ENCODE measurements at regions of chr15 and their contacts with region 1.

Region 1: DNA sequence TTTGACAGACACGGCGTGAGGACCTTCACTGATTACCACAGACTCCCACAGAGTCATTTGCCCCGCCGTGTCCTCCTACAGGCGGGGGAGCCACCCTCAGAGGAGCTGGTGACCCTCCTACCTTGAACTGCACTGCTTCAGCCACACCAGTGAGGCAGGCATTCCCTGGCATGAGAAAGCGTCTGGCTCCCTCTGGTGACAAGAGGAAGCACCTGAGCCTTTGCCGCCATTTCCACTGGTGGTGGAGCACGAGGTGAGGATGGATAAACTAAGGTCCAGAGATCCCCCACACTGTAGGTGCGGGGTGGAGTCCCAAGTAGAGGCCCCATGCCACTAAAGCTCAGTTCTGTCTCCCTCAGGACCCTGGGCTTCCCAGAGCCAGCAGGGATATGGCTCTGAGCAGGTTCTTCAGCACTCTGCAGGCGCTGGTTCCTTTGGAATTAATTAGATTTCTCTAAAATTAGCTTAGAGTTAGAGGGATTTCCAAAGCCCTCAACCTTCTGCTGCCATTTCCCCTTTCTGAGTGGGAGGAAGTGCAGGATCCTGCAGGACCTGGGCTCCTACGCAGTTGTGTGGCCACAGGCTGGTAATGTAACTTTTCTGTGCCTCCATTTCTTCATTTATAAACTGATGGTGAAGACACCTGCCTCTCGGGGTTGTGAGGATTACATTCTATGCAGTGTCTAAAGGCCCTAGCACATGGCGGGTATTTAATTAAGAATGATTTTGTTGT is 224.0 kb downstream of the SLCO3A1 start:
- DNase-seq: peak; percentile 38 to 80
- H3K4me3 ChIP-seq: no peak overlapping the region
- H3K27ac ChIP-seq: no peak overlapping the region
- H3K4me1 ChIP-seq: peaks cover 0 to 2% (median 0%) of the 10 kb centered on the region in 4 experiments; a peak in 2 of 7 replicates
- H3K27me3 ChIP-seq: no peaks in the 10 kb centered on the region
- CTCF ChIP-seq: peak; percentile 93 to 97 (median 96)
- EP300 ChIP-seq: no peak
- POLR2A ChIP-seq: no peak
- RAD21 ChIP-seq: peak; percentile 97 to 99

Region 2: DNA sequence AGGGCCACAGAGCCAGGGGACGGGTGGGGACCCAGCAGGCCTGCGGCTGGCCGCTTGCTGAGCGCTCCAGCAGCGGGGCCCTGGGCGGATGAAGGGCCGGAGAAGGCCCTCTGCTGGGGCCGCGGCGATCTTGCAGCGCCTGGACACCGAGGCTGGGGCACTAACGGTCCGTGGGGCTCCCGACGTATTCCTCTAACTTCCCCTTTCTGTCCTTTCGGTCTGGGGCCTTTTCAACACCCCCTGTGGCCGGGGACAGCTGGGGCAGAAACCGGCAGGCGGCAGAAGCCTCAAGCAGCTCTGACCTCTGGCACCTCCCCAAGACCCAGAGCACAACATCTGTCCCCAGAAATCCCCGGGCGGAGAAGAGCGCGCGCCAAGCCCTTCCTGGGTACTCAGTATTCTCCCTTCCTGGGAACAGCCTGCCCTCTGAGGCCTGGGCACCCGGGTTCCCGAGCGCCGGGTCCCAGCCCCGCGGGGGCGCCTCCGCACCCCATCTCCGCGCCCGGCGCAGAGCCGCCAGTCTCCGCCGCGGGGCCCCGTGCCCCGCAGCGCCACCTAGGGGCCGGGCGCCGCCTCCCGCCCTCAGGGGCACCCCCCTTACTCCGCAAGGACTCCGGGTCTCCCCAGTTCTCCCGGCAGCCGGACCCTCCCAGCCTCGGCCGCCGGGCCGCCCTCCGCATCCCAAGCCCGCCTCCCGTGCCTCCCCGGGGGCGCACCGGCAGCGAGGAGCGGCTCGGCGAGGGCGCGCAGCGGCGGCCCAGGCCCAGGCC is 224.6 kb before region 1 on chr15:
- CTCF ChIA-PET with region 1: interaction called, 118 read pairs
- POLR2A ChIA-PET with region 1: no interaction called
- DNase-seq: peak in 1 of 2 experiments; percentile 86
- H3K4me3 ChIP-seq: peak overlapping the region; percentile 66 to 86 (median 74)
- H3K27ac ChIP-seq: no peak overlapping the region
- H3K4me1 ChIP-seq: peaks cover 7 to 15% (median 11%) of the 10 kb centered on the region in 4 experiments; a peak in 6 of 7 replicates
- H3K27me3 ChIP-seq: peaks cover 0 to 11% (median 10%) of the 10 kb centered on the region in 4 experiments; a peak in 5 of 7 replicates
- CTCF ChIP-seq: peak; percentile 63 to 88 (median 76)
- EP300 ChIP-seq: no peak
- POLR2A ChIP-seq: peak in 1 of 2 experiments; percentile 19; a peak in 1 of 3 replicates
- RAD21 ChIP-seq: peak; percentile 50 to 56

Region 3: GRCh38 chr15:91897585-91898372 is 179.7 kb before region 1 on chr15:
- CTCF ChIA-PET with region 1: interaction called, 18 read pairs
- POLR2A ChIA-PET with region 1: no interaction called
- DNase-seq: no peak
- H3K4me3 ChIP-seq: no peak overlapping the region
- H3K27ac ChIP-seq: no peak overlapping the region
- H3K4me1 ChIP-seq: peaks cover 0 to 16% (median 6%) of the 10 kb centered on the region in 4 experiments; a peak in 4 of 7 replicates
- H3K27me3 ChIP-seq: no peaks in the 10 kb centered on the region
- CTCF ChIP-seq: no peak
- EP300 ChIP-seq: no peak
- POLR2A ChIP-seq: no peak
- RAD21 ChIP-seq: no peak

Region 4: DNA sequence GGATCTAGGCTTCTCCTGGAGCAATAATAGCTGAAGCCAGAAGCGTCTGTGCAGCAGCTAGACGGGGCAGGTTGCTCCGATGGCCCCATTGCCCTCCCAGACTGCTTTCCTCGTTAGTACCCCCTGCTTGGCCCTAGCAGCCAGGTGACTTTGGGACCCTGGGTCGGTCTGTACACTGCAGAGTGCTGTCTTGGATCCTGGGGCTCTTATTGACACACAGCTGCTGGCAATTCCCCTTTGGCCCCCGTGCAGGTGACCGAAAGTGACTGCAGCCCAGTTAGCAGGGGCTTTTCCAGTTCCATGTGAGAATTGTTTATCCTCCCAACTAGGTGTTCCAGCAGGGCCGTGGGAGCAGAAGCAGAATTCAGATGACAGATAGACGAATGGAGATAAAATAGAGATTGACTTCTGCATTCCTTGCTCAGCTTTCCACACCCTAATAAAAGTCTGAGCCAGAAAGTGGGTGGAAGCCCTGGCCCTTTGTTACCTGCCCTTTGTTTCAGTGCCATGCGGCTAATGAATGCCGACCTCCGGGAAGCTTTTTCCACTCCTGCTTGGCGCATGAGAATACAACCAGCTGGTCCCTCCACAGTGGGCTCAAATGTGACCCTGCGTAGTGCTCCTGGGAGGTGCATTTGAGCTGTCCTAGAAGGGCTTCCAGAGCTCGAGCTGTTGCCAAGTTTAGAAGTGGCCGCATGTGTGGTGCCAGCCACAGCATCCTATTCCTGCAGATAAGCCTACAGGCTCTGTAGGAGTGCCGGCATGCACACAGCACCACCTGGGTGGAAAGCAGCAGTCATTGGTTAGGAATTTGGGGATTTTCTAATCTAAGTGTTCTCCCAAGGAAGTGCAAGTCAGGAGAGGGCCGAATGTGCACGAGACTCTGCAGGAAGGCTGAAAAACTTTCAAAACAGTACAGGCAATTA is 129.6 kb before region 1 on chr15:
- CTCF ChIA-PET with region 1: interaction called, 34 read pairs
- POLR2A ChIA-PET with region 1: no interaction called
- DNase-seq: peak; percentile 56 to 59
- H3K4me3 ChIP-seq: peak overlapping the region in 2 of 4 experiments; percentile 6 to 16; a peak in 1 of 8 replicates
- H3K27ac ChIP-seq: peak overlapping the region; percentile 76
- H3K4me1 ChIP-seq: peaks cover 21 to 40% (median 25%) of the 10 kb centered on the region in 4 experiments
- H3K27me3 ChIP-seq: no peaks in the 10 kb centered on the region
- CTCF ChIP-seq: no peak
- EP300 ChIP-seq: 0 out of 3 replicates have a peak, but pooled peaks of 1 of the 2 experiments have one; percentile 8
- POLR2A ChIP-seq: peak; percentile 22 to 53
- RAD21 ChIP-seq: 0 out of 4 replicates have a peak, but pooled peaks of 1 of the 2 experiments have one; percentile 1

Region 5: DNA sequence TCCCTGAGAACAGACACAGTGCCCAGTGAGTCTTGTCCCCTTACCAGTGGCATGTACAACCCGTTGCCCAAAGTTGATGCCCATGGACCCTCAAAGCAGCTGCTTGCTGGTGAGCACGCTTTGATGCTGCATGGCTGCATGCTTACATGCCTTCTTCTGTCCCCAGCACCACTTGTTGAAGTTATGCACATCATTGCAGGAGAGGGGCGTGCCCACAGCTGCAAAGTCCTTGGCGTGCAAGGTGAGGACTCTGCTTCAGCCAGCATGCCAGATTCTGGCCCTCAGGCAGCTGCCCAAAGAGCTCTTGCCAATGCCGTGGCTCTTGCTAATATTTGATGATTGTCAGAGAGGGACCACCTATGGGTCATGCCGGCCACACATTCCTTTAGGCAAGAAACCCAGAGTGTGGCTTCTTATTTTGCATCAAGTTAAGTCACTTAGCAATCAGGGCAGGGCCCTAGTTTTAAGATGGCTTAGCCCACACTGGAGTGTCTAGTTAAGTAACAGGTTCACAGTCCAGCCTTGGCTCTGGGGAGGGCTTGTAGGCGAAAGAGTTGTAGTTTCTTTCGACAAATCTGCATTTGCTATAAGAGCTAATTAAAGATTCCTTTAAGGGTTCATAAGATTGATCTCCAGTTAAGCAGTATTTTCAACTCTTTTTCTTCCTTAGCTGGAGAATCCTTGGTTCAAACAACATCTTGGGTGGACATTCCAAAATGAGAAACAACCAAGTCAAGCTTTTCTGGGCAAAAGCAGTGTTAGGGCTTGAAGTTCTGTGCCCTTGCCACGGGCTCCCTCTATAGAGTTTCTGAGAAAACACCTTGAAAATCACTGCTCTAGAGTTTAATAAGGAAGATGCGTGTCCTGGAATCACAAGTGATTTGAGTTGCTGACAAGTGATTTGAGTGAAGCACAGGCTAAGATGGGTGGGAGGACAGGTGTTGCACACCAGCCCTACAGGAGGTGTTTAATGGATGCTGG is 95.4 kb before region 1 on chr15:
- CTCF ChIA-PET with region 1: interaction called, 19 read pairs
- POLR2A ChIA-PET with region 1: no interaction called
- DNase-seq: no peak
- H3K4me3 ChIP-seq: no peak overlapping the region
- H3K27ac ChIP-seq: no peak overlapping the region
- H3K4me1 ChIP-seq: peaks cover 0 to 3% (median 0%) of the 10 kb centered on the region in 4 experiments; a peak in 1 of 7 replicates
- H3K27me3 ChIP-seq: no peaks in the 10 kb centered on the region
- CTCF ChIP-seq: no peak
- EP300 ChIP-seq: no peak
- POLR2A ChIP-seq: no peak
- RAD21 ChIP-seq: peak; percentile 19 to 32; a peak in 2 of 4 replicates

Region 6: GRCh38 chr15:92091155-92091734 is 13.7 kb after region 1 on chr15:
- CTCF ChIA-PET with region 1: interaction called, 20 read pairs
- POLR2A ChIA-PET with region 1: interaction called, 3 read pairs
- DNase-seq: peak in 1 of 2 experiments; percentile 94
- H3K4me3 ChIP-seq: no peak overlapping the region
- H3K27ac ChIP-seq: no peak overlapping the region
- H3K4me1 ChIP-seq: peaks cover 0 to 3% (median 0%) of the 10 kb centered on the region in 4 experiments; a peak in 2 of 7 replicates
- H3K27me3 ChIP-seq: no peaks in the 10 kb centered on the region
- CTCF ChIP-seq: peak; percentile 78 to 91 (median 85)
- EP300 ChIP-seq: no peak
- POLR2A ChIP-seq: no peak
- RAD21 ChIP-seq: peak; percentile 87 to 91